Activated CD8-positive, alpha-beta T cell treated with anti-CD3 and anti-CD28 coated beads, Interleukin-2, amount 10 ng/mL, durations not matched to agents 7 days and 5 days (primary cell): ENCODE measurements at regions of chr7 and their contacts with region 1.

Region 1: GRCh38 chr7:50304158-50304910 is at the start of gene IKZF1:
- DNase-seq: peak; percentile 69
- ATAC-seq: peak; percentile 43
- H3K4me3 Mint-ChIP-seq: peak within 1 kb of the TSS; percentile 92
- H3K27ac Mint-ChIP-seq: peak within 1 kb of the TSS; percentile 98
- H3K4me1 Mint-ChIP-seq: peaks cover 35% of the 10 kb centered on the region
- H3K27me3 Mint-ChIP-seq: no peaks in the 10 kb centered on the region
- total RNA-seq, gene IKZF1: 370 to 374 TPM

Region 2: DNA sequence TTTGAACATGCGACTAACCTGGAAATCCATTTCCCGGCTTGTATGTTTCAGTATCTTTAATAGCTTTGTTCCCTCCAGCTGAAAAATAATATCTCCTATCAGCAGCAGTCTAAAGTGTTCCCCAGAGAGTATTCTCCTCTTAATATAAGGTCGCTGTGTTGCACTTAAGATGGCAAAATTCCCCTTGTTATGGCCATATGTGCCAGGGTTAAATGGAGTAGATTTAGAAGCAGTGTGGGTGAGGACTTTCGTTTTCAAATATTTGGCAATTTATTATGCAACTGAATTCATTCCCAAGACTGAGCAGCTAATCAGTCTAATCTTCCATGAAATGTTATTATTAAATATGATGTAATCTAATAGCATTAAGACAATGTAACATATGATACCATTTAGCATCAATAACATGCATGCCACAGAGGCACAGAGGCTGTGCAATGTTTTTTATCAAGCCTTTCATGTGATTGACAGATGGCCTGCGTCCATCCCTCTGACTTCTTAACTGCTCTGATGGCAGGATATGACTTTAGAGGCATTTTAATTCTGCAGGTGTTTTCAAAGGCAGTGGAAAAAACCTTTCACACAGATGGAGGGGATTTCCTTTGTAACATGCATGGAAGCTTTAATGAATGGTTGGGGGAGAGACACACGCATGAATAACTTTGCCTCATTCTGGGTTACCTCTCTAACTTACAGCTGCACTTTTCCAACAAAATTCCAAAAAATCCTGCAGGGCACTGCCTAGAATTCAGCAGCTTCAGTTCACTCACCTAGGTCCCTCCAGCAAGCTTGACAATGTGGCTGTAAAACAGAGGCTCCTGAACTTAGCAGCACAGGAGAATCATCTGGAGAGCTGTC is 156.2 kb before region 1 on chr7:
- CTCF ChIA-PET with region 1: interaction called, 4 read pairs
- POLR2A ChIA-PET with region 1: interaction called, 12 read pairs
- DNase-seq: peak; percentile 52
- ATAC-seq: peak; percentile 57
- H3K4me3 Mint-ChIP-seq: no peak overlapping the region
- H3K27ac Mint-ChIP-seq: peak overlapping the region; percentile 75
- H3K4me1 Mint-ChIP-seq: peaks cover 76% of the 10 kb centered on the region
- H3K27me3 Mint-ChIP-seq: no peaks in the 10 kb centered on the region

Region 3: GRCh38 chr7:50281680-50282445 is 22.5 kb before region 1 on chr7:
- CTCF ChIA-PET with region 1: interaction called, 4 read pairs
- POLR2A ChIA-PET with region 1: interaction called, 11 read pairs
- DNase-seq: peak; percentile 51
- ATAC-seq: peak; percentile 75
- H3K4me3 Mint-ChIP-seq: peak overlapping the region; percentile 56
- H3K27ac Mint-ChIP-seq: peak overlapping the region; percentile 87
- H3K4me1 Mint-ChIP-seq: peaks cover 66% of the 10 kb centered on the region
- H3K27me3 Mint-ChIP-seq: no peaks in the 10 kb centered on the region

Region 4: GRCh38 chr7:50317221-50317678 is 12.9 kb after region 1 on chr7:
- CTCF ChIA-PET with region 1: interaction called, 10 read pairs
- POLR2A ChIA-PET with region 1: interaction called, 39 read pairs
- DNase-seq: peak; percentile 71
- ATAC-seq: peak; percentile 71
- H3K4me3 Mint-ChIP-seq: peak overlapping the region; percentile 76
- H3K27ac Mint-ChIP-seq: peak overlapping the region; percentile 93
- H3K4me1 Mint-ChIP-seq: peaks cover 94% of the 10 kb centered on the region
- H3K27me3 Mint-ChIP-seq: no peaks in the 10 kb centered on the region

Region 5: GRCh38 chr7:50349963-50350944 is 45.9 kb after region 1 on chr7:
- CTCF ChIA-PET with region 1: interaction called, 7 read pairs
- POLR2A ChIA-PET with region 1: interaction called, 128 read pairs
- DNase-seq: peak; percentile 82
- ATAC-seq: peak; percentile 67
- H3K4me3 Mint-ChIP-seq: peak overlapping the region; percentile 64
- H3K27ac Mint-ChIP-seq: peak overlapping the region; percentile 89
- H3K4me1 Mint-ChIP-seq: peaks cover 97% of the 10 kb centered on the region
- H3K27me3 Mint-ChIP-seq: no peaks in the 10 kb centered on the region

Region 6: DNA sequence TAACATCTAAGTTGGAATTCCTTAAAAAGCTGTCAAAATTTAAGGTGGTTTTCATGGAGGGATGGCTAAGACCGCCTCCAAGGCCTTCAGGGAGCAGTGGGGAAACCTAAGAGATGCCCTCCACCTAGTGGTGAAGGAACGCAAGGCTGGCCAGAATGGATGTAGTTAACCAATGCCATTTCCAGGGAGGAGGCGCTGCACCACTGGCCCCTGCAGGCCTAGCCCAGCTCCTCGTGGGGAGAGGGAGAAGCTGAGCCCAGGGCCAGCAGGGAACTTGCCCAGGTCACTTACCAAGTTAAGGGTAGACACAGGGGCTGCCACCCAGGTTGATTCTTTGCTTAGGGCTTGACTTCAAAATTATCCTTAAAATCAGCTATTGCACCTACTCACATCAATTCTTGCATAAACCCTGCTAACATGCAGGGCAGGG is 113.8 kb after region 1 on chr7:
- CTCF ChIA-PET with region 1: interaction called, 11 read pairs
- POLR2A ChIA-PET with region 1: no interaction called
- DNase-seq: peak; percentile 86
- ATAC-seq: peak; percentile 90
- H3K4me3 Mint-ChIP-seq: no peak overlapping the region
- H3K27ac Mint-ChIP-seq: no peak overlapping the region
- H3K4me1 Mint-ChIP-seq: peaks cover 27% of the 10 kb centered on the region
- H3K27me3 Mint-ChIP-seq: no peaks in the 10 kb centered on the region